Tibial artery (tissue), 4 donors: ENCODE measurements at regions of chr15 and their contacts with region 1.

Region 1: DNA sequence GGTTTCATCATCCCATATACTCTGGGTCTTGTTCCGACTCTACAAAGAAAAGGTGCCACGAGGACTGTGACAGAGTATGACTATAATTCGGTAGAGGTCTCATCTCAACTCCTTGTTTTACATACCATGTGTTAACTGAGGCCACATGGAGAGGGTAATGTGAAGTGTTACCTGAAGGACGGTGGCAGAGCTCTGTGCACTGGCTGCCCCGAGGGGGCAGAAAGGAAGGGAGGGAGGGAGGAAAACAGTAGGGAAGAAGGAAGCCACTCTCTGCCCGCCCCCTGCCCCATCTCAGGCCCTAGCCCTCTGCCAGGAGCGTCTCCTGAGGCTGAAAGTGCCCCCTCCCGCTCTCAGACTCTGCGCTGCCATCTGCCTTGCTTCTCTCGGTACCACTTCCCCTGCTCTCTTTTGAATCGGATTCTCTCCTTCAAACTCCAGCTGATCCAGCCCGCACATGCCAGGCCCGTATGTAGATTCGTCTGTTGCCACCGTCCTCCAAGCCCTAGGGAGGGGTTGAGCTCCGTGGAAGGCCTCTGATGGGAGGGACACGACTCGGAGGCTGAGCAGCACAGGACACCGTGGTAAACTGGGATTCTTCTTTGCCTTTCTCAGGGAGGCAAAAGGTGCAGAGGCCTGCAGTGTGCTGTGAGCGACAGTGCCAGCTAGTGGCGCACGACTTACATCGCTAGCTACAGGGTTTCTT is 70.5 kb upstream of the ATP10A start:
- DNase-seq: peak; percentile 69 to 88
- H3K4me3 ChIP-seq: peak overlapping the region; percentile 27 to 36
- H3K27ac ChIP-seq: peak overlapping the region; percentile 42 to 55
- H3K4me1 ChIP-seq: peaks cover 0 to 10% (median 6%) of the 10 kb centered on the region in 4 donors
- H3K27me3 ChIP-seq: no peaks in the 10 kb centered on the region
- CTCF ChIP-seq: peak; percentile 67 to 73

Region 2: DNA sequence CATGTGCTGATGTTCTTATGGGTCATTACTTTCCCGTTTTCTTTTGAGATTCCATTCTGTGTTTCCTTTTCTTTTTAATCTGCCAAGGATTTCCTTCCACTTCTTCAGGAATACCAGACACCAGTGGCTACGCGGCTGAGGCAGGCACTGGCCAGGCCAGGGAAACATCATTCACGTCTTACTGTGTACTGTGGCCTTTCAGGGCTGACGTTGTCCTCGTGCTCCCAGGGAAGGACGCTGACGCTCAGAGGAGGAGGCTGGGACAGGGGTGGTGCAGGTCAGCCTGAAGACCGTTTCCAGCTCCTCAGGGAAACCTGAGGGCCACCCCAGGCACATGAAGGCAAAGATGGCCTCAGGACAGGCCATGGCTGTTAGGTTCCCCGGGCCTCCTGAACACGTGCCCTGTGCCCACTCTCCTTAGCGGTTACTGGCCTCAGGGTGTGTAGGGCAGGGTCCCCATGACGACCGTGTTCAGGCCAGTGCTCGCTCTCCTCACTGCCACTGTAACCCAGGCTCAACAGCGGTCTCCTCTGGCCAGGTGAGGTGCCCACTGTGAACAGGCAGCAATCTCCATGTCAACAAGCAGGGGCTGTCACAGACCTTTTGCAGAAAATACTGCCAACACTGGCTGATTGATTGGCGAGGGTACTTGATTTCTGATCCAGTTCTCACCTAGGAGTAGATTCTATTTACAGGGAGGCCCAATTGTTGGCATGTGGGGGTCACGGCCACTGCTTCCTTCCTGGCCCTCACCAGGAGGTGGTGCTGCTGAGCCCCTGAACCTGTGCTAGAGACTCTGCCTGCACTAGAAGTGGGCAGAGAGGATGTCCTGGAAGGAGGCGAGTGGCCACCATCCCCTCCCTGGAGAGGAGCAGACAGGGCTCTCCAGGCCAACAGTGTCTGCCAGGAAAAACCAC is 240.0 kb before region 1 on chr15:
- intact Hi-C with region 1: loop called (anchors 2 kb)
- DNase-seq: peak in 1 of 2 donors; percentile 72
- H3K4me3 ChIP-seq: no peak overlapping the region
- H3K27ac ChIP-seq: peak overlapping the region; percentile 38 to 50
- H3K4me1 ChIP-seq: peaks cover 0 to 38% (median 20%) of the 10 kb centered on the region in 4 donors
- H3K27me3 ChIP-seq: no peaks in the 10 kb centered on the region
- CTCF ChIP-seq: peak; percentile 66 to 69